Mammary epithelial cell (primary cell): ENCODE measurements at regions of chr15 and their contacts with region 1.

Region 1: GRCh38 chr15:57213862-57214261 is 162.4 kb upstream of the CGNL1 start:
- DNase-seq: peak; percentile 24
- H3K4me3 ChIP-seq: no peak overlapping the region
- H3K27ac ChIP-seq: no peak overlapping the region
- H3K4me1 ChIP-seq: peaks cover 21% of the 10 kb centered on the region
- H3K27me3 ChIP-seq: no peaks in the 10 kb centered on the region
- CTCF ChIP-seq: peak; percentile 34 to 59

Region 2: GRCh38 chr15:56496635-56497034 is 717.2 kb before region 1 on chr15:
- CTCF ChIA-PET with region 1: interaction called, 3 read pairs
- dilution Hi-C with region 1: no loop called
- in situ Hi-C with region 1: no loop called
- intact Hi-C with region 1: loop called (anchors 2 kb)
- DNase-seq: peak; percentile 48
- H3K4me3 ChIP-seq: no peak overlapping the region
- H3K27ac ChIP-seq: no peak overlapping the region
- H3K4me1 ChIP-seq: no peaks in the 10 kb centered on the region
- H3K27me3 ChIP-seq: no peaks in the 10 kb centered on the region
- CTCF ChIP-seq: peak; percentile 71 to 83

Region 3: GRCh38 chr15:57017024-57017423 is 196.8 kb before region 1 on chr15:
- CTCF ChIA-PET with region 1: no interaction called
- dilution Hi-C with region 1: no loop called
- in situ Hi-C with region 1: no loop called
- intact Hi-C with region 1: loop called (anchors 5 kb)
- DNase-seq: no peak
- H3K4me3 ChIP-seq: no peak overlapping the region
- H3K27ac ChIP-seq: no peak overlapping the region
- H3K4me1 ChIP-seq: peaks cover 25% of the 10 kb centered on the region
- H3K27me3 ChIP-seq: no peaks in the 10 kb centered on the region
- CTCF ChIP-seq: peak in 1 of 2 donors; percentile 29

Region 4: GRCh38 chr15:57146506-57147201 is 67.2 kb before region 1 on chr15:
- CTCF ChIA-PET with region 1: interaction called, 4 read pairs
- dilution Hi-C with region 1: no loop called
- in situ Hi-C with region 1: no loop called
- intact Hi-C with region 1: loop called (anchors 1 kb)
- DNase-seq: peak; percentile 29
- H3K4me3 ChIP-seq: no peak overlapping the region
- H3K27ac ChIP-seq: peak overlapping the region; percentile 52
- H3K4me1 ChIP-seq: peaks cover 31% of the 10 kb centered on the region
- H3K27me3 ChIP-seq: no peaks in the 10 kb centered on the region
- CTCF ChIP-seq: peak; percentile 48 to 66

Region 5: GRCh38 chr15:57323806-57324589 is 110.1 kb after region 1 on chr15:
- CTCF ChIA-PET with region 1: no interaction called
- dilution Hi-C with region 1: no loop called
- in situ Hi-C with region 1: no loop called
- intact Hi-C with region 1: no loop called
- DNase-seq: peak; percentile 51
- H3K4me3 ChIP-seq: no peak overlapping the region
- H3K27ac ChIP-seq: no peak overlapping the region
- H3K4me1 ChIP-seq: no peaks in the 10 kb centered on the region
- H3K27me3 ChIP-seq: no peaks in the 10 kb centered on the region
- CTCF ChIP-seq: no peak

Region 6: GRCh38 chr15:57375827-57376695 is 162.2 kb after region 1 on chr15 and contains the start of gene CGNL1:
- CTCF ChIA-PET with region 1: no interaction called
- dilution Hi-C with region 1: no loop called
- in situ Hi-C with region 1: no loop called
- intact Hi-C with region 1: loop called (anchors 5 kb)
- DNase-seq: no peak
- H3K4me3 ChIP-seq: peak within 1 kb of the TSS; percentile 42 to 52 (median 46)
- H3K27ac ChIP-seq: no peak within 1 kb of the TSS
- H3K4me1 ChIP-seq: peaks cover 10% of the 10 kb centered on the region
- H3K27me3 ChIP-seq: peaks cover 12% of the 10 kb centered on the region
- CTCF ChIP-seq: no peak
- total RNA-seq, gene CGNL1: 0.07 to 1.2 TPM